Activated CD8-positive, alpha-beta T cell treated with anti-CD3 and anti-CD28 coated beads for 36 hours (primary cell): ENCODE measurements at regions of chr1 and their contacts with region 1.

Region 1: DNA sequence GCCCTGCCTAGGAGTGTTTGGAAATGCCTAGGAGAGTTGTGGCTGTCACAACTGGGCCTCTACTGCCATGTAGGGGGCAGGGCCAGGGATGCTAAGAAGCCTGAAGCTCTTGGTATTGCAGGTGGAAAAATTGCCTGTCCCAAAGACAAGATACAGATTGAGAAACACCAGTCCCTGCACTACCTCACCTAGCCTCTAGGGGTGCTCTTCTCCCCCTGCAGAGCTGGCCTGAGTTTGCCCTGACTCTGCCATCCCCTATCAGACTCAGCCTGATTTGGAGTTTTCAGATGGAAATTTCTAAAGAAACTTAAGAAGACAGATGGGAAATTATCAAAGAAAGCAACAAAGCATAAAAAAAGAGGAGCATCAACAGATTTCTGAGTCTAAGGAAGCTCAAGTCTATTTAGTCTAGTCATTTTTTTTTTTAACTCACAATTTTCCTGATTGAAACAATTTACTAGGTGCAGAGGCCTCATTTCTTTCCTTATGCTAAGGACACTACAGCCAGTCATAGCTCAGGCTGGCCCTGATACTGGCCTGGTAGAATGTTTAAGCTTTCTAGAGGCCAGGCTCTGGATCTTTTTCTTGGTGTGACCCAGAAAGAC is 61.4 kb upstream of the LRRN2 start:
- DNase-seq: peak; percentile 68
- ATAC-seq: peak; percentile 99
- H3K4me3 Mint-ChIP-seq: no peak overlapping the region
- H3K27ac Mint-ChIP-seq: no peak overlapping the region
- H3K4me1 Mint-ChIP-seq: no peaks in the 10 kb centered on the region
- H3K27me3 Mint-ChIP-seq: peaks cover 6% of the 10 kb centered on the region
- CTCF ChIP-seq: peak; percentile 91

Region 2: GRCh38 chr1:204350857-204351573 is 395.9 kb before region 1 on chr1:
- CTCF ChIA-PET with region 1: no interaction called
- POLR2A ChIA-PET with region 1: no interaction called
- intact Hi-C with region 1: no loop called
- DNase-seq: peak; percentile 34
- ATAC-seq: peak; percentile 52
- H3K4me3 Mint-ChIP-seq: no peak overlapping the region
- H3K27ac Mint-ChIP-seq: no peak overlapping the region
- H3K4me1 Mint-ChIP-seq: peaks cover 2% of the 10 kb centered on the region
- H3K27me3 Mint-ChIP-seq: no peaks in the 10 kb centered on the region
- CTCF ChIP-seq: no peak

Region 3: GRCh38 chr1:204615881-204616280 is 131.1 kb before region 1 on chr1:
- CTCF ChIA-PET with region 1: interaction called, 11 read pairs
- POLR2A ChIA-PET with region 1: no interaction called
- intact Hi-C with region 1: no loop called
- DNase-seq: no peak
- ATAC-seq: no peak
- H3K4me3 Mint-ChIP-seq: no peak overlapping the region
- H3K27ac Mint-ChIP-seq: no peak overlapping the region
- H3K4me1 Mint-ChIP-seq: no peaks in the 10 kb centered on the region
- H3K27me3 Mint-ChIP-seq: no peaks in the 10 kb centered on the region
- CTCF ChIP-seq: no peak

Region 4: DNA sequence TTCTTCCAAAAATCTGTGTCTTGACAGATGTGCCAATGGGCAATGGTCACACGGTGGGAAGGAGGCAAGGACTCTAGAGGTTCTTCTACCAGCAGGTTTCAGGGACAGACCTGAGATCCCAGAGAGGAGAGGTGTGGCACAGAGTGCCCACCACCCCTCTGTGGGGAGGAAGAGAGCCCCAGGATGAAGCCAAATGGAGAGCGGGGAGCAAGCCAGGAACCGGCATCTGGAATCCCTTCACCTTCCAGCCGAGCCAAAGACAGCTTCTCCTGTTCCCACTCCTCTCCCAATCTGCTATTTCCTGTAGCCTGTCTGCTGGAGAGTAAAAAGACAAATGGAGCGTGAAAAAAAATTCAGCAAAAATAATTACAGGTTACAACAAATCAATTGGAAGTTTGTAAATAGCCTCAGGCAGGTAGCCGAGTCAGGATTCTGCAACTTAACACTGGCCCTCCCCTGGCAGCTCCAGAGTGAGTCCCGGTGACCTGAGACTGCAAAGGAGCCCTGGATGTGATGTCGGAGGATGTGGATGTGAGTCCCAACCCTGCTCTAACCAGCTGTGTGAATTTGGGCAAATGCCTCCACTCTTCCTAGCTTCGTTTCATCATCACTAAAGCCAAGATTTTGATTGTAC is 16.0 kb before region 1 on chr1:
- CTCF ChIA-PET with region 1: interaction called, 33 read pairs
- POLR2A ChIA-PET with region 1: no interaction called
- intact Hi-C with region 1: no loop called
- DNase-seq: no peak
- ATAC-seq: no peak
- H3K4me3 Mint-ChIP-seq: no peak overlapping the region
- H3K27ac Mint-ChIP-seq: no peak overlapping the region
- H3K4me1 Mint-ChIP-seq: peaks cover 3% of the 10 kb centered on the region
- H3K27me3 Mint-ChIP-seq: peaks cover 13% of the 10 kb centered on the region
- CTCF ChIP-seq: no peak

Region 5: DNA sequence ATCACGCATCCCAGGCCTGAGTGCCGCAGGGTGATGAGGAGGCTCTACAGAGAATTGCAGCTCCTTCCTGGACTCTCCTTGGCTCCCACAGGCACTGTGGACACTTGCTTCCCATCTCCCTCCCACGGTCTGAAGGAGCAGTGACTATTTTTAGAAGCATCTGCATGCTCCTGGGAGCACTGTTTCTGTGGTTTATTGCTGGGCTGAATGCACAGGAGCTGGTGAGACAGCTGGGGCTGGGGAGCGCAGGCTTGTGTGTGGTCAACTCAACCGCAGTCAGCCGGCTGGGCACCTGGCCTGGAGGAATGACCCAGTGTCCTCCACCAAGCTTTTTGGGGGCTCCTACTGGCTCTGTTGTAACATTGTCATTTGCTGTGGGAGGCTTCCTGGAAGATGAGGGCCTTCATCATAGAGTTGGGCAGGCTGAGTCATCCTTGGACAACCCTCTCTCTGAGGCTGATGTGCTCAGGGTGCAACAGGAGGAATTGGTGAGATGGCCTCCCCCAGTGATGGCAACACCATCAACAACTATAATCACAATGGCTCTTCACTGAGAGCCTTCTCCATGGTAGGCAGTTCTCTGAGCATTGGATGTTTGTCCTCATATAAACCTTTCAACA is 125.4 kb after region 1 on chr1:
- CTCF ChIA-PET with region 1: no interaction called
- POLR2A ChIA-PET with region 1: no interaction called
- intact Hi-C with region 1: no loop called
- DNase-seq: peak; percentile 8
- ATAC-seq: peak; percentile 37
- H3K4me3 Mint-ChIP-seq: no peak overlapping the region
- H3K27ac Mint-ChIP-seq: no peak overlapping the region
- H3K4me1 Mint-ChIP-seq: no peaks in the 10 kb centered on the region
- H3K27me3 Mint-ChIP-seq: peaks cover 9% of the 10 kb centered on the region
- CTCF ChIP-seq: no peak